ENCODE measurements at regions of chr17 and their contacts with region 1.

Region 1: GRCh38 chr17:68435876-68436842 is 21.1 kb downstream of the WIPI1 start:
- DNase-seq: peak; percentile 39 to 85 (median 64)
- H3K4me3 ChIP-seq: no peak overlapping the region
- H3K27ac ChIP-seq: peak overlapping the region in 28 of 59 donors; percentile 4 to 60 (median 23)
- H3K27me3 ChIP-seq: no peaks in the 10 kb centered on the region
- CTCF ChIP-seq: peak; percentile 76 to 94 (median 89)

Region 2: GRCh38 chr17:67336859-67337258 is 1099.3 kb before region 1 on chr17:
- intact Hi-C with region 1: no loop called
- DNase-seq: no peak
- H3K4me3 ChIP-seq: no peak overlapping the region
- H3K27ac ChIP-seq: no peak overlapping the region
- H3K27me3 ChIP-seq: no peaks in the 10 kb centered on the region
- CTCF ChIP-seq: no peak

Region 3: DNA sequence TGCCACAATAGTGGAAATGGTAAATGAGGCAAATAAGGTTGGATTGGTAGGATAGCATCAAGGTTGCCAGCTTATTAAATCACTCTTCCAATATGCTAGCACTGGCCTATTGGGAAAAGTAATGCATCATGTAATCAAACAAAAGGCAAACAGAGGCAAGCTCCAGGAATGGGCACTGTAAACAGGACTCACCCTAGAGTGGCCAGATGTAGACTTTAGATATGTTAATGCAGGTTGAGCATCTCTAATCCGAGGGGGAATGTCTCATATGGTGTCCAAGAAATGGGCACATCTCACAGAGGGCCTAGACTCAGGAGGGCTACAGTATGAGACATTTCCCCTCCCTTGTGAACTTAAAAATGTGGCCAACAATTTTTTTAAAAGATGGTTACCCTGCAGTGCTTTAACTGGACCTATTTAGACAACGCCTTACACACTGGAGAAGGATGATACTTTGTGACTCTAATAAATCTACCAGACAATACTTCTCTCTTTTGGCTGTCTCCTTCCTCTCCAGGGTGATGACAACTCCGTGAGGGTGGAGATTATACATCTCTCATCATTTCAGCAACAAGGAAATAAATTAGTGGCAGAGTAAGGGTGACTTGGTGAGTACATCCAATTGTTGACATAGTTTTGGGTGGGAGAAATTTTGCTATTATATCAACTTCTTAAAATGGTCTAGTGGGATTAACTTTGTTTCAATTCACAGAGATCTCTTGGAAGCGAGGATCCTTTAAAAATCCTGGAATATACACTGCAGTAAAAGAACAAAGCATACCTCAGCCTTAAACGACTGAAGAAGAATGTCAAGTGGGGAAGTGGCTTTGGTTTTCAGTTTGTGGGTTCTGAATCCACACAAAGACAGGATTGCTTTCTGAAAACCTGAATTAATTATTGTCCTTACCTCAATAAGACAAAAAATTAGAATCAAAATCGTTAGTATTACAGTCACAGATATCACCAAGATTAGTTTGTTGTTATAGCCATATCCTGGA is 311.0 kb before region 1 on chr17:
- intact Hi-C with region 1: no loop called
- DNase-seq: no peak
- H3K4me3 ChIP-seq: no peak overlapping the region
- H3K27ac ChIP-seq: no peak overlapping the region
- H3K27me3 ChIP-seq: no peaks in the 10 kb centered on the region
- CTCF ChIP-seq: no peak

Region 4: DNA sequence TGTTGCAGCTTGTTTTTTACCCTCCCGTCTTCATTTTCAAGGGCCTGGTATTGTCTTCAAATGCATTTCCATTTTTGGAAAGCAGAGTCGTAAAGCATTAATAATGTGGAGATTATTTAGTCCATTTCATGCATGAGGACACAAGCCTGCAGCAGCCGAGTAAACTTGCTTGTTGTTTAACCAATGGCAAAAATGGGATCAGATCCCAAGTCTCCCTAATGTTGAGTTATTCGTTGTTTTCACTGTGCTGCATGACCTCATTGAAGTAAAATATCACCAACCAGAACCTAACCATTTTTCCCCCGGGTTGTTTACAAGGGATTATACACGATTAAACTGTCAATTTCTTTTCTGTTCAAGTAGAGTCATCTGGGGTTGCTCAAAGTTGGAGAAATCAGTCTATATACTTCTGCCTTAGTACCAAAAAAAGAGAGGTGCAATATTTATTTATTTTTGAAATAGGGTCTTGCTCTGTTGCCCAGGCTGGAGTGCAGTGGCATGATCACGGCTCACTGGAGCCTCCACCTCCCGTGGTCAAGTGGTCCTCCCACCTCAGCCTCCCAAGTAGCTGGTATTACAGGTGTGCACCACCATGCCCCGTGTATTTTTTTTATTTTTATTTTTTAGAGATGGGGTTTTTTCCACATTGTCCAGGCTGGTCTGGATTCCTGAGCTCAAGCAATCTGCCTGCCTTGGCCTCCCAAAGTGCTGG is 176.0 kb before region 1 on chr17:
- intact Hi-C with region 1: loop called in 1 of 2 experiments (anchors 2 kb)
- DNase-seq: peak in 1 of 10 donors; percentile 18
- H3K4me3 ChIP-seq: no peak overlapping the region
- H3K27ac ChIP-seq: peak overlapping the region in 12 of 59 donors; percentile 2 to 81 (median 54)
- H3K27me3 ChIP-seq: no peaks in the 10 kb centered on the region
- CTCF ChIP-seq: no peak

Region 5: DNA sequence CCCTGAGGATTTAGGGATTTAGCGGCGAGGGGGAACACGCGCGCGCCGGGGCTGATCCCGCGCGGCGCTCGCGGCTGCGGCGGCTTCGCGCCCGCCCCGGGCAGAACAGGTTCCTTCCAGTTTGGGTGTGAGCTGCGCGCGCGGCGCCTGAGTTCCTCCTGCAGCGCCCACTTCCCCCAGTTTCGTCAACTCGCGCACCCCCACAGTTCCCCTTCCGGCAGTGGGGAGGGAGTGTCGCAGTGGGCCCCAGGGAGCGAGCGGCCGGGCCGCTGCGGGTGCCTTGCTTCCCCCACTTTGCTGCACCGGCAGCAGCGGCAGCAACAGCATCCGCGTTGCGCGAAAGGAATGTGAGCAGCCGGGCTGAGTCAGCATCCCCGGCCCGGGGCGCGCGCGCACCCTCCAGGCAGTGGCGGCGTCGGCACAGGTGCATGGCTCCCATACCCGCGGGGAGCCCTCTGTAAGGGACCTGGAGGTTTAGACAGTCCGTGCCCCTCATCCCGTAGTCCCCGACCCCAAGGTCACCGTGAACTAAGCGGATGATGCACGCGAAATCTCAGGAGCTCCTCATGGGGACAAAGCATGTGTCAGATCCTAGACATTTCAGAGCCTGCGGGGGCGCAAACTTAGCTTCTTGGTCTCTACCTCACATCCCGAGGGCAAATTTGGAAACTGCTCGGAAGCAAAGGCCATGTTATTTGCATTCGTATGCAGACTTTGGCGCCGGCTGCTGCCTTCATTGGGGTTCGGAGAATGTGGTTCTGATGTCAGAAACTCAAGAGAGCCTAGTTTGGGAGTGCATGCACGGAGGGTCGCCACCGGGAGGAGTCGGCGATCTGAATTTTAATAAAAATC is 144.1 kb before region 1 on chr17:
- intact Hi-C with region 1: loop called in 1 of 2 experiments (anchors 10 kb)
- DNase-seq: peak; percentile 33 to 79 (median 65)
- H3K4me3 ChIP-seq: peak overlapping the region; percentile 44 to 83 (median 69)
- H3K27ac ChIP-seq: peak overlapping the region in 58 of 59 donors; percentile 29 to 95 (median 83)
- H3K27me3 ChIP-seq: peaks cover 0 to 58% (median 0%) of the 10 kb centered on the region in 45 donors
- CTCF ChIP-seq: peak in 5 of 56 donors; percentile 4 to 19 (median 9)

Region 6: DNA sequence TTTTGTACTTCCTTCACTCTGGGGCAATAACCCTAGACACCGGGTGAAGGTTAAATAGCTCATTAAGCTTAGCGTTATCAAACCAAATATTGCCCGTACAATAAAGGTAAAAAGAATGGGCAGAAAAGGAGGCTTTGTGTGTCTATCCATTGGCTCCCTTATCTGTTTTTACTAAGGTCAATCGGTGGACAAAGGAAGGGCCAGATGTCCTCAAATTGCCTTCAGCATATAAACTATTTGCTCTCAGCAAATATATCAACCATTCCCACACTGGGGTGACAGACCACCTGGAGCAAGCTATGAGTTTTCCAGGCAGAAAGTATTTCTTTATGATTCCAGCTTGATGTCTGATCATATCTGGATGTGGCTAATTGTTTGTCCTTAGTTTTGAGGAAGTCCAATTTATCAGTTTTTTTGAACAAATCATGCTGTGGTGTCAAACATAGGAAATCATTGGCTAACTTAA is 46.5 kb after region 1 on chr17:
- intact Hi-C with region 1: no loop called
- DNase-seq: no peak
- H3K4me3 ChIP-seq: no peak overlapping the region
- H3K27ac ChIP-seq: no peak overlapping the region
- H3K27me3 ChIP-seq: no peaks in the 10 kb centered on the region
- CTCF ChIP-seq: no peak